H1 (cell line): ENCODE measurements at regions of chr19 and their contacts with region 1.

Region 1: DNA sequence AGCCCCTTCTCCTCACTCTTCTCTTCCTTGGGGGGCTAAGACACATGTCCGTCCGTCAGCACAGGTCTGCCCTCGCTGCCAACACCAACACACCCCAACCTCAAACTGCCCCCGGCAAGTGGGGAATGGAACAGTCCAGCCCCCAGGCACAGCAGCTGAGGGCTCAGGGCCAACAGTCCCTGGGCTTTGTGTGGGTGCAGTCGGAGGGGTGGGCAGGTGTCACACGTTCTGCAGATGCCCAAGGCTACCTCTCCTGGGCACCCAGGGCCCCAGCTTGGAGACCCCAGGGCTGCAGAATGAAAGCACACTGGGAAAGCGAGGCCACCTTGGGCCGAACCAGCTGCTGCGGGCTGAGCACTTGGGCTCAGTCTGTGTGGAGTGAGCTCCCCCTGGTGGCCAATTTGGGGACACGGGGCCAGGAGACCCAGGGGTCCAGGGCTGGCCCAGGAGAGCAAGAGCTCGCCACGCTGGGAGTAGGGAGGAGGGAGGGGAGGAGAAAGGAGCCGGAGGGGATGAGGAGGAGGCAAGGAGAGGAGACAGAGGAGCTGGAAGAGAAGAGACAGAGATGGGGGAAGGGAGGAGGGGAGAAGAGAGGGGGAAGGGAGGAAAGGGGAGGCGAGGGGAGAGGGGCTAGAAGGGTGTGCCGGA is 14.0 kb upstream of the ATP8B3 start:
- DNase-seq: peak; percentile 56 to 97
- H3K4me3 ChIP-seq: no peak overlapping the region
- H3K27ac ChIP-seq: 0 out of 2 replicates have a peak overlapping the region, but pooled peaks have one; percentile 34
- H3K4me1 ChIP-seq: peaks cover 0 to 14% (median 8%) of the 10 kb centered on the region in 4 experiments; a peak in 6 of 7 replicates
- H3K27me3 ChIP-seq: no peaks in the 10 kb centered on the region
- CTCF ChIP-seq: peak; percentile 91 to 95 (median 93)
- EP300 ChIP-seq: no peak
- POLR2A ChIP-seq: no peak
- RAD21 ChIP-seq: peak; percentile 84 to 90

Region 2: DNA sequence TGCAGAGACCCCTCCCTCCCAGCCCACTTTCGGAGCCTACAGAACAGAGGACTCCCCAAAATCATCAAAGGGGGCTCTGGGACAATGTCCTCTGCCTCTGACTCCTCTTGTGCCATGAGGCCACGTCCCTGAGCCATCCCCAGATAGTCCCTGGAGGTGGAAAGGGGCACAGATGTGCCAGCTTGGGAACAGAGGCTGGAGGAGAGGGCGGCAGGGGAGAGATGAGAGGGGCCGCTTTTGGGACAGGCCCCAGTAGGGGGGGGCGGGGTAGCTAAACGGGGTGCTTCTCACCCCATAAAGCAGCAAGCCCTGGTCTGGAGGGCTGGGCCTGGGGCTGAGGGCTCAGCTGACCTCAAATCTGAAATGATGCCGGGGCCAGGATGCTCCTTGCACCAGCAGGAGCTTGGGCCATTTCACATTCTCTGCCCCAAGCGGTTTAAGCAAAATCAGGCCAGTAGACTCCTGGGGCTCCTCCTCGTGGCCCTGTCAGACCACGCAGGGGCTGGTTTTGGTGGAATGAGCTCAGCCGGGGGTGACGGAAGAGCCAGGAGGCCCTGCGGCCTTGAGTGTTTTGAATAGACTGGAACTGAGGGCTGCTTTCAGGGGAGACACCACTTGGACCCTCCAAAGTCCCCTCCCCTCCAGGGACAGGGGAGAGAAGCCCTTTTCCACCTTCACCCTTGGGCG is 45.6 kb before region 1 on chr19:
- CTCF ChIA-PET with region 1: interaction called, 34 read pairs
- POLR2A ChIA-PET with region 1: no interaction called
- DNase-seq: no peak
- H3K4me3 ChIP-seq: no peak overlapping the region
- H3K27ac ChIP-seq: no peak overlapping the region
- H3K4me1 ChIP-seq: peaks cover 0 to 5% (median 2%) of the 10 kb centered on the region in 4 experiments; a peak in 3 of 7 replicates
- H3K27me3 ChIP-seq: peaks cover 22 to 57% (median 55%) of the 10 kb centered on the region in 4 experiments
- CTCF ChIP-seq: peak in 2 of 3 experiments; percentile 6 to 42; a peak in 3 of 4 replicates
- EP300 ChIP-seq: no peak
- POLR2A ChIP-seq: no peak
- RAD21 ChIP-seq: no peak

Region 3: GRCh38 chr19:1794424-1795172 is 31.4 kb before region 1 on chr19:
- CTCF ChIA-PET with region 1: interaction called, 85 read pairs
- POLR2A ChIA-PET with region 1: no interaction called
- DNase-seq: peak in 1 of 2 experiments; percentile 39
- H3K4me3 ChIP-seq: no peak overlapping the region
- H3K27ac ChIP-seq: no peak overlapping the region
- H3K4me1 ChIP-seq: peaks cover 0 to 15% (median 8%) of the 10 kb centered on the region in 4 experiments; a peak in 5 of 7 replicates
- H3K27me3 ChIP-seq: peaks cover 0 to 4% (median under 1%) of the 10 kb centered on the region in 4 experiments; a peak in 2 of 7 replicates
- CTCF ChIP-seq: peak in 2 of 3 experiments; percentile 7 to 15; a peak in 2 of 4 replicates
- EP300 ChIP-seq: no peak
- POLR2A ChIP-seq: no peak
- RAD21 ChIP-seq: no peak; a peak in 1 of 4 replicates

Region 4: DNA sequence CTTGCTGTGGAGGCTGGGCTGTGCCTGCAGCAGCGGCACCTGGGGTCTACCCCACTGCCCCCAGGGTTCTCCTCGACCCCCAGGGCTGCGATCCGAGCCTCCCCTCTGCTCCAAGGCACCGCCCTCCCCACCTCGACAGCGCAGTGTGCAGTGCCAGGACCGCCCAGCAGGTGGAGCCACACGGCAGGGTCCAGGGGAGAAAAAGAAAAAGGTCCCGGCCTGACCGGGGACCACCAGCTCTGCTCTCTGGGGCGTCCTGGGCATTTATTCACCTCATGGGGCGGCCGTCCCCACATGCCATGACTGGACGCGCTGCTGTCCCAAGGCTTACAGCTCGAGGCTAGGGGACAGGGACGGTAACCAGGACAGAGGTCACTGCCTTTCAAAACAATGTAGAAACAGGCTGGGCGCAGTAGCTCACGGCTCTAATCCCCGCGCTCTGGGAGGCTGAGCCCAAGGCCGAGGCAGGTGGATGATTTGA is 11.6 kb after region 1 on chr19:
- CTCF ChIA-PET with region 1: interaction called, 228 read pairs
- POLR2A ChIA-PET with region 1: interaction called, 5 read pairs
- DNase-seq: peak in 1 of 2 experiments; percentile 98
- H3K4me3 ChIP-seq: no peak overlapping the region
- H3K27ac ChIP-seq: no peak overlapping the region
- H3K4me1 ChIP-seq: 0 out of 7 replicates have a peak, but pooled peaks cover 0 to 2% (median 0%) of the 10 kb centered on the region in 4 experiments
- H3K27me3 ChIP-seq: no peaks in the 10 kb centered on the region
- CTCF ChIP-seq: peak; percentile 89 to 94 (median 91)
- EP300 ChIP-seq: no peak
- POLR2A ChIP-seq: no peak
- RAD21 ChIP-seq: peak; percentile 41 to 62; a peak in 3 of 4 replicates

Region 5: DNA sequence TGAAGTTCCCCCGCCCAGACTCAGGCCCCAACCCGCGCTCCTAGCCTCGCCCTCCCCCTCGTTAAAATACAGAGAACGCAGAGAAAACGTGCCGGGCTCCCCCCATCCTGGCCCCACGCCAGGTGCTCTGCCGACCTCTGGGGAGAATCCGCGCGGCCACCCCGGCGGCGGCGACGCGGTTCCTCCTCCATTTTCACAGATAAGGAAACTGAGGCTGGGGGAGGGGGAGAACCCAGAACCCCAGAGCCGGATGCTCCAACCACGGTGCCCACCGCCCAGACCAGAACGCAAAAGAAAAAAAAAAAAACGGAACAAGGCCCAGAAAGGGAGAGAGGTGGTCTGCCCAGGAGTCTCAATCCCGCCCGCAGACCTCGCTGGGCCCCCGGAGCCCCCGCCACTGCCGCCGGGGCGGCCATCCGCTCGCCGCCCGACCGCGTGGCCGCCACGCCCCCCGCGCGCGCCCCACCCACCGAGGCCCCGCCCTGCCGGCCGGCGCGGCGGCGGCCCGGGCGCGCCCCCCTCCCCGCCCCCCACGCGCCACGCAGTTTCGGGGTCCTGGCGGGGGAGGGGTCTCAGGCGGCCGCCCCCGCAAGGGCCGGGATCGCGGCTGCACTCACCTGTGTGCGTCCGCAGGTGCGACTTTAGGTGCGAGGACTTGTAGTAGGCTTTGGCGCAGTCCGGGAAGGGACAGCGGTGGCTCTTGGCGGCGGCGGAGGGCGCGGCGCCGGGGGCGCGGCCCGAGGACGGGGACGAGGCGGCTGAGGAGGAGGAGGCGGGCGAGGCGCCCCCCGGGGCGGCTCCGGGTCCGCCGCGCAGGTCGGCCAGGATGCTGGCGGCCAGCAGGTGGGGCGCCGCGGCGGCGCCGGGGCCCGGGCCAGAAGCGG is 36.6 kb after region 1 on chr19:
- CTCF ChIA-PET with region 1: no interaction called
- POLR2A ChIA-PET with region 1: no interaction called
- DNase-seq: peak in 1 of 2 experiments; percentile 73
- H3K4me3 ChIP-seq: peak overlapping the region; percentile 66 to 84 (median 78)
- H3K27ac ChIP-seq: no peak overlapping the region
- H3K4me1 ChIP-seq: peaks cover 0 to 47% (median 33%) of the 10 kb centered on the region in 4 experiments; a peak in 6 of 7 replicates
- H3K27me3 ChIP-seq: peaks cover 0 to 15% (median 6%) of the 10 kb centered on the region in 4 experiments; a peak in 5 of 7 replicates
- CTCF ChIP-seq: no peak
- EP300 ChIP-seq: no peak
- POLR2A ChIP-seq: no peak
- RAD21 ChIP-seq: no peak

Region 6: GRCh38 chr19:1967087-1967608 is 141.1 kb after region 1 on chr19:
- CTCF ChIA-PET with region 1: no interaction called
- POLR2A ChIA-PET with region 1: no interaction called
- DNase-seq: no peak
- H3K4me3 ChIP-seq: no peak overlapping the region
- H3K27ac ChIP-seq: no peak overlapping the region
- H3K4me1 ChIP-seq: no peaks in the 10 kb centered on the region
- H3K27me3 ChIP-seq: no peaks in the 10 kb centered on the region
- CTCF ChIP-seq: no peak
- EP300 ChIP-seq: no peak
- POLR2A ChIP-seq: no peak
- RAD21 ChIP-seq: no peak